ENCODE measurements at regions of chr4 and their contacts with region 1.

Region 1: DNA sequence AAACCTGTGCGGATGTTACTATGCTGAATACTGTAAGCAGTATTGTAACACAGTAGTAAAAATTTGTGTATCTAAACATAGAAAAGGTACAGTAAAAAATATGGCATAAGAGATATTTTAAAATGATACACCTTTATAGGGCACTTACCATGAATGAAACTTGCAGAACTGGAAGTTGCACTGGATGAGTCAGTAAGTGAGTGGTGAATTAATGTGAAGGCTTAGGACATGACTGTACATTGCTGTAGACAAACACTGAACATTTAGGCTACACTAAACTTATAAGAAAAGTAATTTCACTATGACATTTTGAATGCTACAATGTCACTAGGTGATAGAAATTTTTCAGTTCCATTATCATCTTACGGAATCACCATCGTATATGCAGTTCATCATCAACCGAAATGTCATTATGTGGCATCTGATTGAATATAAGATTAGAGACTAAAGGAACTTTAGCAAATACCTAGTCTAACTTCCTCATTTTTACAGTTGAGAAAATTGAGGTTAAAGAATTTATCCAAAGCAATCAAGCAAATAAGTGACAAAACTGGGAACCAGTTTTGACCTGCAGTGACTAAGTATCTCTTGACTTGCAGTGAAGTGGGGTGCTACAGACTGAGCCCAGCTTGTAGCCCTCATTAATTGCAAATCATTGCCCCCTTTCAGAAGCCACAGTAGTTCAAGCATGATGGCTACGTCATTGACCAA is 55.3 kb downstream of the EGF start:
- DNase-seq: no peak
- ATAC-seq: no peak
- H3K4me3 ChIP-seq: no peak overlapping the region
- H3K27ac ChIP-seq: no peak overlapping the region
- H3K4me1 ChIP-seq: no peaks in the 10 kb centered on the region; a peak in 2 of 5 replicates
- H3K27me3 ChIP-seq: no peaks in the 10 kb centered on the region; a peak in 1 of 5 replicates
- CTCF ChIP-seq: no peak
- EP300 ChIP-seq: no peak
- POLR2A ChIP-seq: no peak
- RAD21 ChIP-seq: no peak

Region 2: DNA sequence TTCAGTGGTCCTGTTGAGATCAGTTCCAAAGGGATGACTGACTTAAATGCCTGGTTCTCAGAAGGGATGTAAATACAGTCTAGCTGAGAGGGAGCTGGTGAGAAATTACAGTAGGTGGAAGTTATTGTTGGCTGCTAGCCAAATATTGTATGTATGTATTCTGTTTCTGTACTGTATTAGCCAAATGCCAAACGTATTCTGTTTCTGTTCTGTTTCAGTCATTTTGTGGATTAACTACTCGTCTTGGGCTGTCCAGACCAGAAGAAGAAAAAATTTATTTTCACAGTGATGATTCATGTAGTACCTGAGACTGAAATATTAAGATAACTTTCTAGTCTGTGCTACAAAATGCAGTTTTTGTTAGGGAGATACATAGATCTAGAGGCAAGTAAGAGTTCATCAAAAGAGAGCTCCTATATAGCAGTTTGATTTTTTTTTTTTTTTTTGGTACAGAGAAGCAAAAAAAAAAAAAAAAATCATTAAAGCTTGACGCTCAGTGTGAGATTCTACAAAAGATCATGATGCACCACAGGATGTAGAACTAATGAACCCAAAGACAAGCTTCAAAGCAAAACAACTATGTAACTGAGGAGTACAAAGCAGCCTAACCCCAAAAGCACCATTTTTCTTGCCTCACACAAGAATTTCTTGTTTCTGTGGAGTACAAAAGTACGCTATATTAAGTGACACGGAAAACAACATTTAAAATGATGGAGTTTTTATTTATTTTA is 319.5 kb before region 1 on chr4:
- CTCF ChIA-PET with region 1: no interaction called
- POLR2A ChIA-PET with region 1: no interaction called
- in situ Hi-C with region 1: no loop called
- intact Hi-C with region 1: loop called (anchors 10 kb)
- DNase-seq: no peak
- ATAC-seq: no peak
- H3K4me3 ChIP-seq: no peak overlapping the region
- H3K27ac ChIP-seq: no peak overlapping the region
- H3K4me1 ChIP-seq: no peaks in the 10 kb centered on the region
- H3K27me3 ChIP-seq: peaks cover 0 to 2% of the 10 kb centered on the region in 2 experiments; a peak in 1 of 5 replicates
- CTCF ChIP-seq: no peak
- EP300 ChIP-seq: no peak
- POLR2A ChIP-seq: no peak
- RAD21 ChIP-seq: no peak; a peak in 1 of 4 replicates

Measured in K562 (cell line).